ENCODE measurements at regions of chr2 and their contacts with region 1.

Region 1: DNA sequence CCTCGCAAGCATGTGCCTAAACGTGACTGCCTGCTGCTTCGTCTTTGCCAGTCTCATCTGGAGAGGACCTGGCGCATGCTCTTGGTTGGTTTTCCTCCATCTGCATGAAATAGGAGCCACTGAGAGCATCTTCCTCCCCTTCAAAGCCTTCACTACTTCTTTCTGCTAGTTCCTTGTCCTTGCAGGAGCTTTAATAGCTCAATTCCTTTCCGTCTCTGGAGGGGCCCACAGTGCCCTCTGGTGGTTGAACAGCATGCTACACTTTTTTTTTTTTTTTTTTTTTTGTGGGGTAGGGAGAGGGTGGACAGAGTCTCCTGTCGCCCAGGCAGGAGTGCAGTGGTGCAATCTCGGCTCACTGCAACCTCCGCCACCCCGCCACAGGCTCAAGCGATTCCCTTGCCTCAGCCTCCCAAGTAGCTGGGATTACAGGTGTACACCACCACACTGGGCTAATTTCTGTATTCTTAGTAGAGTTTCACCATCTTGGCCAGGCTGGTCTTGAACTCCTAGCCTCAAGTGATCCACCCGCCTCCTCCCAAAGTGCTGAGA is 59.6 kb downstream of the SP110 start:
- DNase-seq: peak in 2 of 10 donors; percentile 12 to 14
- H3K4me3 ChIP-seq: no peak overlapping the region
- H3K27ac ChIP-seq: no peak overlapping the region
- H3K27me3 ChIP-seq: no peaks in the 10 kb centered on the region
- CTCF ChIP-seq: peak; percentile 53 to 89 (median 81)

Region 2: GRCh38 chr2:230007931-230008707 is 152.1 kb before region 1 on chr2:
- intact Hi-C with region 1: loop called (anchors 5 kb)
- DNase-seq: peak; percentile 49 to 89 (median 74)
- H3K4me3 ChIP-seq: peak overlapping the region in 13 of 59 donors; percentile 3 to 39 (median 25)
- H3K27ac ChIP-seq: no peak overlapping the region
- H3K27me3 ChIP-seq: no peaks in the 10 kb centered on the region
- CTCF ChIP-seq: peak; percentile 72 to 90 (median 84)

Region 3: DNA sequence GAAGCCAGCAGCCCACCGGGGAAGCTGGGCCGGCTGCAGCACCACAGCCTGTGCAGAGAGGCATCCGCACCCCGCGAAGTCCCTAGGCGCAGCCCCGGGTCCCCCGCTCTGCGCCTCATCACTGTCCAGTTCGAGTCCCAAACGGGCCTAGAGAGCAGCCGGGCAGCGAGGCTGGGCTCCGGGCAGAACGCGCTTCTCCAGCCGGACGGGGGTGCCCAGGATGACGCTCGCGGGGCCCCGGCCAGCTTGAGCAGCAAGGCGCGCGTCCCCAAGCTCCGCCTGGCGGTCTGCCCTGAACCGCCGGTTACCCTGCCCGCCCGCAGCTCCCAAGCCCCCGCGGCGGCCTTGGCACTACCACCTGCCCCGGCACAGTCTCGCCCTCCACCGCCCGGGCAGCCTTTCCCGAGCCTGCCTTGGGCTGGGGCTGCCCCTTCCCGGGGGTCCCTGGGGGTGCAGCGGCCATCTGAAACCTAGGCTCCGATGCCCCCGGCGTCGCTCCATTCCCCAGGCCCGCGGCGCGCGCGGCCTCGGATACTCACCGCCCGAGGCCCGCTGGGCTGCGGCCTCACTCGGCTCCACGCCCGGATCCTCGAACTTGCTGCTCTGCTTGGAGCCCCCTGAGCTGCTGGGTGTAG is 92.1 kb before region 1 on chr2:
- intact Hi-C with region 1: loop called (anchors 2 to 5 kb)
- DNase-seq: peak in 9 of 10 donors; percentile 30 to 77 (median 60)
- H3K4me3 ChIP-seq: peak overlapping the region; percentile 57 to 89 (median 75)
- H3K27ac ChIP-seq: peak overlapping the region in 57 of 59 donors; percentile 64 to 94 (median 89)
- H3K27me3 ChIP-seq: no peaks in the 10 kb centered on the region
- CTCF ChIP-seq: peak in 17 of 56 donors; percentile 3 to 35 (median 17)